Activated naive CD4-positive, alpha-beta T cell treated with anti-CD3 and anti-CD28 coated beads for 36 hours (primary cell): ENCODE measurements at regions of chr14 and their contacts with region 1.

Region 1: DNA sequence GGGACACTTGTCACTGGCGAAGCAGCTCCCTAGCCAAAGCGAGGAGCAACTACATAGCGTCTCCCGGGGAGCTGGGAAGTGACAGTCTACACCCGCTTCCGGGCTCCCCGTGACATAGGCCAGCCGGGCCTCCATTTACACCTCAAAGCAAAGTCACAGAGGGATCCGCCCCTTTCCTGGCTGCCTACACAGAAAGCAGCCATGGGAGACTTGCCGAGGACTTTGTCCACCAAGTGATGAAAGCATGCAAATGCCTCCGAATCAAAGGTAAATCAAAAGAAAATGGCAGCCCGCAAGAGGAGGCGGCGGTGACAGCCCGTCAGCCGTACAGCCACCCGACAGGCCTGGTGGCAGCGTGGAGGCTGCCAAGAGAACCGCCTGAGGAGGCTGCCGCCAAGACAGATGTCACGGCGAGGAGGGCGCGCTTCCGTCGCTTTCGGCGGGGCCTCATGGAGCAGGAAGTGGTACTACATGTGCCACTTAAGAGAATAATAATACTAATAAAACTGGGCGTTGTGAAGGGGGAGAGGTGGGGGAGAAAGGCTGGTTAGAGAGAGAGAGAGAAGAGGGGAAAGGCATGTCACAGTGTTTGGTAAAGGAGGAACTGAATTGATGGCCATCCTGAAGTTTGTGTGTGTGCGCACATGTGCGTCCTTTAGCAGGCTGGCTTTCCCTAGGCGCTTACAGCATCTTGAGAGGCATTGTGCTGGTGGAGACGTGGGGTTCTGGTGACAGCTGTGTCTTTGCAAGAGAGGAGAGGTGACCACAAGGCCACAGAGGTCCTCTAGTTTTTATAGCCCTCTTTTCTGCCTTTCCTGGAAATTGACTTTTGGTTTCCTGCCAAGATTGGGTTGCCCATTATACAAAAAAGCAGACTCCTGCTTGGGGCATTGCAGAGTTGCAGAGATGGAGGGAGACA is 661.7 kb downstream of the VRK1 start:
- DNase-seq: peak; percentile 91
- H3K4me3 Mint-ChIP-seq: peak overlapping the region; percentile 96
- H3K27ac Mint-ChIP-seq: peak overlapping the region; percentile 100
- H3K4me1 Mint-ChIP-seq: peaks cover 32% of the 10 kb centered on the region
- H3K27me3 Mint-ChIP-seq: no peaks in the 10 kb centered on the region

Region 2: GRCh38 chr14:97306760-97307246 is 152.1 kb before region 1 on chr14:
- CTCF ChIA-PET with region 1: no interaction called
- intact Hi-C with region 1: loop called (anchors 2 kb)
- DNase-seq: peak; percentile 43
- H3K4me3 Mint-ChIP-seq: no peak overlapping the region
- H3K27ac Mint-ChIP-seq: peak overlapping the region; percentile 90
- H3K4me1 Mint-ChIP-seq: peaks cover 28% of the 10 kb centered on the region
- H3K27me3 Mint-ChIP-seq: no peaks in the 10 kb centered on the region

Region 3: DNA sequence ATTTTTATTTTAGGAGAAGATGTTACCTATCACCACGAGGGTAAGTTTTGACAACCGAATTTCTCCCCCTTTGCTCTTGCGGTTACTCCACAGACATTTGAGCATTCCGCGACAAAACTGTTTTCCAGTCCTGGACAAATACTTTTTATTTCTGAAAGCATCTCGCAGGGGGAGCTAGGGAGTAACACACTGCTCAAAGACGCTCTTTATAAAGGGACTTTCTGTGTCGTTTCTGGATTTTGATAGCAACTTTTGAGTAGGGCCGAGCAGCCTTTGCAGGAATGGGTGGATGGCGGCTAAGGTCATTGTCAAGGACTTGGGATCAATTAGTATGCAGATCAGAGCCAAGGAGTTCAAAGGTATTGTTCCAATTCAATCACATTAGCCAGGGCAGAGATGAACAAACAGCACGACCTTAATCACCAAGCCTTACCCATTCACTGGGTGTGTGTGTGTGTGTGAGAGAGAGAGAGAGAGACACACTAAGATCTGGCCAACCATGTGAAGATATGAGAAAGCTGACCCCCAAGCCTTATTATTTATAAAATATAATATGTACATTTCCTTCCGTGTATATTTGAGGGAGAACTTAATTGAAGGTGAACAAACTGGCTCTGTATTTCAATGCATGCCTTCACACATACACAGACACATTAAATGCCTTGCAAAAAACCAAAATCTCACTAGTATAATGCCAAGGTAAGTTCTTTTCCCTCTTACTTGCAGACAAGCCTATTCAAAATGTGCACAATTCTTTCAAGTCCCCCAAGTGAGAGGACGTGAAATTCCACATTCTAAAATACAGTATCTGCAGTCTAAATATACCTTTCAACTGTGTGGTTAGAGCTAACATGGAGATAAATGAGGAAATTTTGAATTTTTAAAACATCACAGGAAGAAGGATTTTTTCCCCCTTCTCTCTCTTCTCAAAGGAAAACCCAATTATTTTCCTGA is 48.0 kb before region 1 on chr14:
- CTCF ChIA-PET with region 1: no interaction called
- intact Hi-C with region 1: loop called (anchors 1 kb)
- DNase-seq: no peak
- H3K4me3 Mint-ChIP-seq: no peak overlapping the region
- H3K27ac Mint-ChIP-seq: no peak overlapping the region
- H3K4me1 Mint-ChIP-seq: peaks cover 29% of the 10 kb centered on the region
- H3K27me3 Mint-ChIP-seq: peaks cover 9% of the 10 kb centered on the region

Region 4: DNA sequence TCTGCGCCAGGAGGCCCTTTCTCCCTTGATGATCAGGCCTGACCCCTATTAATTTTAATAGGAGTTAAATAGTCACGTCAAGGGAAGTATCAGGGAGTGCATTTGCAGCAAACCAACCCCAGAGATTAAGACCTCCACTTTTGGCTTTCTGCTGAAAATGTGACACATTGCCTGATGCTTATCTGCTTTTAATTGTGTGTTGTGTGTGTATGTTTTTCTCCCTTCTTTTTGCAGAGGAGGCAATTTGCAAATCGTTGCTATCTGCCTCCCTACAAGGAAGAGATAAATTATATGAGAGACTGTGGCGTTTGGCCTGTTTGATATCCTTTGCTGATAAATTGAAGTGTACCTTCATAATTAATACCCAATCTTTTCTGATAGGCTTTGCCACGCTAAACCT is 161.1 kb after region 1 on chr14:
- CTCF ChIA-PET with region 1: no interaction called
- intact Hi-C with region 1: loop called (anchors 5 kb)
- DNase-seq: no peak
- H3K4me3 Mint-ChIP-seq: peak overlapping the region; percentile 72
- H3K27ac Mint-ChIP-seq: peak overlapping the region; percentile 76
- H3K4me1 Mint-ChIP-seq: peaks cover 46% of the 10 kb centered on the region
- H3K27me3 Mint-ChIP-seq: no peaks in the 10 kb centered on the region

Region 5: GRCh38 chr14:97724265-97724731 is 265.4 kb after region 1 on chr14:
- CTCF ChIA-PET with region 1: no interaction called
- intact Hi-C with region 1: loop called (anchors 5 kb)
- DNase-seq: peak; percentile 64
- H3K4me3 Mint-ChIP-seq: peak overlapping the region; percentile 76
- H3K27ac Mint-ChIP-seq: peak overlapping the region; percentile 96
- H3K4me1 Mint-ChIP-seq: peaks cover 69% of the 10 kb centered on the region
- H3K27me3 Mint-ChIP-seq: no peaks in the 10 kb centered on the region